ENCODE measurements at regions of chr1 and their contacts with region 1.

Region 1: GRCh38 chr1:109532365-109533136 is 7.1 kb upstream of the GPR61 start:
- DNase-seq: peak; percentile 92

Region 2: DNA sequence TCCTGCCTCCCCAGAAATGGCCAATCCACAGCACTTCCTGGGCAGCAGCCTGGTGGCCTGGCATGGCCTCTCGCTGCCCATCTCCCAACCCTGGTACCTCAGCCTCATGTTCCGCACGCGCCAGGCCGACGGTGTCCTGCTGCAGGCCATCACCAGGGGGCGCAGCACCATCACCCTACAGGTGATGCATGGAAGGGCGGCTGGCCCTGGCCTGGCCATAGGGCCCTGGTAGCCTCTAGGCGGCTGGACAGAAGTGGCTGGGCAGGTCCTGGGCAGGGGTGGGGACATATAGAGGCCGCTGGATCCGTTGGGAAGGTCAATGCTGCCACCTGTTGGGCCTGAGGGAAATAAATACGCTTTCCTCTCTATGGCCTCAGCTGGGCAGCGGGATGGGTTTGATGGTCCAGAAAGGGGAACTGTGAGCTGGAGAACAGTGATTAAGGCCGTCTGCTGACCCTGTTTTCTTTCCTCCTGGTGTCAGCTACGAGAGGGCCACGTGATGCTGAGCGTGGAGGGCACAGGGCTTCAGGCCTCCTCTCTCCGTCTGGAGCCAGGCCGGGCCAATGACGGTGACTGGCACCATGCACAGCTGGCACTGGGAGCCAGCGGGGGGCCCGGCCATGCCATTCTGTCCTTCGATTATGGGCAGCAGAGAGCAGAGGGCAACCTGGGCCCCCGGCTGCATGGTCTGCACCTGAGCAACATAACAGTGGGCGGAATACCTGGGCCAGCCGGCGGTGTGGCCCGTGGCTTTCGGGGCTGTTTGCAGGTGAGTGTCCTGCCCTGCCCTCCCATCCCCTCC is 268.8 kb before region 1 on chr1:
- intact Hi-C with region 1: loop called (anchors 5 kb)
- DNase-seq: peak; percentile 92

Region 3: GRCh38 chr1:109282952-109283747 is 249.4 kb before region 1 on chr1 and contains the start of gene PSRC1:
- intact Hi-C with region 1: loop called (anchors 5 kb)
- DNase-seq: peak; percentile 99
- total RNA-seq, gene PSRC1: 0.59 TPM

Region 4: GRCh38 chr1:109404838-109405237 is 127.7 kb before region 1 on chr1:
- intact Hi-C with region 1: loop called (anchors 5 kb)
- DNase-seq: no peak

Region 5: DNA sequence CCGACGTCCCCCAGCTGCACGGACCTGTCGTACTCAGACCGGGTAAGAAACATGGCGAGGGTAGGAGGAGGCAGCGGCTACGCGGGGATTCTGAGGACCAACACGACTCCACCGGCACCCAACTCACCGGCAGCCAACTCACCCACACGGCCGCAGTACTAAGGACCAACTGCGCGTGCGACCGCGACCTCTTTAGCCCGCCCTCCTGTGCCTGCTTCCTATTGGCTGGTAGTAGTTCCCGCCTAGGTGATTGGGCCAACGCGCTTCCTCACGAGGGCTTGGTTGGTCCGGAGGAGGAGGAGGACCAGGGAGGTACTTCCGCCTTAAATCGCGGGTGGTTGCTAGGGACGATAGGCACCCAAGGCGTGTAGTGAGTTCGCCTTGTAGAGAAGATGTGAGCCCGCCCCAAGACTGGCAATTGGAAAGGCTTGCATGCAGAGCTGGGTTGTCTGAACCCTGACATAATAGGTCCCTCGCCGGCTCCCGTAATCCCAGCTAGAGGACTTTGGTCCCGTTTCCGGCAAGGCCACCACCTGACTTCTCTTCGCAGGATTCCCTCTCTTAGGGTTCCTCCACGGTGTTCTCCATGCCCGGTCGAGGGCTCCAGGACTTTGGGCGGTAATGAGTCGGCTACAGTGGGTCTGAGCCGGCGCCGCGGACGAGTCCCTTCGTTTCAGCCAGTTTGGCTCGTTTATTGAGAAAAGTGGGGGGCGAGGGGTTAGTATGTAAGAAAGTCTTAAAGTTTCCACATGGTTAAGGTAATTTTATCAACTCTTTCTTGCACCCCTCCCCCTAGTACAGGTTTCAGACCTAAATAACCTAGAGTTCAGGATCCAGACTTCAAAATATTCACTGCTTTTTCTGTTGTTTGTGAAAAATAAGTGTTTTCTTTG is 106.0 kb before region 1 on chr1 and contains the start of gene PSMA5:
- intact Hi-C with region 1: loop called (anchors 5 kb)
- DNase-seq: peak; percentile 98
- total RNA-seq, gene PSMA5: 60.7 TPM

Region 6: DNA sequence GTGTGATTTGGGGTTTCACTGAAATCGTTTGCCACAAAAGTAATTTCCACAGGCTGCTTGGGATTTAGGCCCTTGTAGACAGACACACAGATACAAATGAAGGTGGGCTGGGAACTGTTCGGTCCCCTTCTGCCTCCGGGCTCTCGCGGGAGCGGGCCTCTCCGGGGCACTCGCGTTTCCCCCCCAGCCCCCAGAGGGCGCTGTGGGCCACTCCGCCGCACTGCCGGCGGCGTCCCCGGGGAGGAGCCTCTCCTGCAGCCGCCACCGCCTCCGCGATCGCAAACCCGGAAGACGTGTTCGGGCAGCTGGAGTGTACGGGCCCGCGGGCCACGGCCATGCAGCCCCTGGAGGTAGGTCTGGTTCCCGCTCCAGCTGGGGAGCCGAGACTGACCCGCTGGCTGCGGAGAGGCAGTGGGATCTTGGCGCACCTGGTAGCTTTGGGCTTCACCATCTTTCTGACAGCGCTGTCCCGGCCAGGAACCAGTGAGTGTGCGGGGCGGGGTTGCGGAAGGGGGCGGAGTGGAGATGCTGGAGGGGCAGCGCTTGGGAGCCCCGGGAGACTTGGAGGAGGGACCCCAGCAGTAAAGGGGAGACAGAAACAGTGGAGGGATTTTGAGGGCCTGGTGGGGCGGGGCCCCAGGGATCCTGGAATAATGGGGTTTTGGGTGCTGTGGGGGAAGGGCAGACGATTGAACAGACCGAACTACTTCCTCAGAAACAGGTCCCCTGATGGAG is 38.6 kb before region 1 on chr1 and contains the start of gene CYB561D1:
- intact Hi-C with region 1: loop called (anchors 1 kb)
- DNase-seq: peak; percentile 96
- total RNA-seq, gene CYB561D1: 5.5 TPM

Region 7: DNA sequence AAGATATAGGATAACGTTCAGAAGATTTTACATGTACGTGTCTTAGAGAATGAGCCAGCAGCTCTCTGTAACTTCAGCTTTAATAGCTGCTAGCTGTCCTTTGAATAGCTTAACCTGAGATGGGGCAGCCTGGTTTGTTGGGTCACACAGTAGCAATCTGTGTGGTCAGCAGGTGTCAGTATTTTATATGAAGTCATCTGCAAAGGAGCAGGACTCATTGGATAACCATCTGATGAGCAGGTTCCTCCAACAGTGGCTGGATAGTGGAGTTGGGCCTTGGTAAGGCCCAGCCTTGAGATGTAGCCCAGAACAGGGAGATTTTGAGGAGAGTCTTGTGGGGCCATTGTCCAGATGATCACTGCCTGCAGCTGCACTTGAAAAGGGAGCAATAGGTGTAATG is 185.9 kb after region 1 on chr1:
- intact Hi-C with region 1: no loop called
- DNase-seq: no peak

Measured in cardiac septum (tissue), 1 donor.